Endothelial cell of umbilical vein (primary cell): ENCODE measurements at regions of chr1 and their contacts with region 1.

Region 1: DNA sequence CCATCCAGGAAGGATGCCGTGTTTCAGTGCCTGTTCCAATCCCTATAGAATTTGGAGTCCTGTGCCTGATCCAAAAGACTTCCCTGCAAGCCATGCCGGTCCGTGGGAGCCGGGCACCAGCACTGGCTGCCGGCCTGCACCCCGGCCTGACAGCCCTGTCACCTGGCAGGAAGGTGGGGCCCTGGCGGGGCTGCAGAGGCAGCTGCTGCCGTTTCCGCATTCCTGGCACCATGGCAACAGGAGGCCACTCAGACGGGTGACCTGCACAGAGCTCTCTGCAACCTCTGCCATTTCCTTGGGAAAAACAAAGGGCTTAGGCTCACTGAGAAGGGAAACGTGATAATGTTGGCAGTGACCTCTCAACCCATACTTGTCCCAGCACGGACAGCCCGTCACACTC is 63.2 kb upstream of the TMEM51 start:
- DNase-seq: peak; percentile 57
- H3K4me3 ChIP-seq: no peak overlapping the region
- H3K27ac ChIP-seq: no peak overlapping the region
- H3K4me1 ChIP-seq: peaks cover 11% of the 10 kb centered on the region
- H3K27me3 ChIP-seq: no peaks in the 10 kb centered on the region
- CTCF ChIP-seq: no peak
- POLR2A ChIP-seq: no peak

Region 2: DNA sequence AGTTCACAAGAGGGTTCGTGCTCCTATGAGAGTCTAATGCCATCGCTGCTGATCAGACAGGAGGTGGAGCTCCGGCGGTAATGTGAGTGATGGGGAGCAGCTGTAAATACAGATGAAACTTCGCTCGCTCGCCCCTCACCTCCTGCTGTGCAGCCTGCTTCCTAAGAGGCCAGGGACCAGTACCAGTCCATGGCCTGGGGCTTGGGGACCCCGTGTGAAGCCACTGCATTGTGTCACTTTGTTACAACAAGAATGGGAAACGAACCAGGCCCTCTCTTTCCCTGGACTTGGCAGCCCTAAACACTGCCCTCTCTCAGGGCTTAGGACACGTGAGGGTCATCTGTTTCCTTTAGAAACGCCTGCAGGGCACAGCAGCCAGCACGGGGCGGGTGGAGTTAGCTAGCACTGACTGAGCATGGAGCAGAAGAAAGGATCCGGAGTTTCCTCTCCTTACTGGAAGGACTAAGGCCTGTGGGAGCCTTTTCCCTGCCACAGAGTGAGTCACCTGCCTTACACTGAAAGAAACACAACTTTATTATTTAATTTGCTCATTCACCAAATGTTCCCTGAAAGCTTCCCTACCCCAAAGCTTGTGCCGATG is 122.0 kb before region 1 on chr1:
- CTCF ChIA-PET with region 1: no interaction called
- POLR2A ChIA-PET with region 1: no interaction called
- dilution Hi-C with region 1: no loop called
- intact Hi-C with region 1: no loop called
- DNase-seq: peak; percentile 67
- H3K4me3 ChIP-seq: no peak overlapping the region
- H3K27ac ChIP-seq: no peak overlapping the region
- H3K4me1 ChIP-seq: peaks cover 2% of the 10 kb centered on the region
- H3K27me3 ChIP-seq: no peaks in the 10 kb centered on the region
- CTCF ChIP-seq: no peak
- POLR2A ChIP-seq: no peak

Region 3: GRCh38 chr1:15038232-15039016 is 51.9 kb before region 1 on chr1:
- CTCF ChIA-PET with region 1: no interaction called
- POLR2A ChIA-PET with region 1: no interaction called
- dilution Hi-C with region 1: no loop called
- intact Hi-C with region 1: loop called (anchors 1 kb)
- DNase-seq: no peak
- H3K4me3 ChIP-seq: no peak overlapping the region
- H3K27ac ChIP-seq: no peak overlapping the region
- H3K4me1 ChIP-seq: no peaks in the 10 kb centered on the region
- H3K27me3 ChIP-seq: no peaks in the 10 kb centered on the region
- CTCF ChIP-seq: peak; percentile 31 to 35
- POLR2A ChIP-seq: no peak

Region 4: DNA sequence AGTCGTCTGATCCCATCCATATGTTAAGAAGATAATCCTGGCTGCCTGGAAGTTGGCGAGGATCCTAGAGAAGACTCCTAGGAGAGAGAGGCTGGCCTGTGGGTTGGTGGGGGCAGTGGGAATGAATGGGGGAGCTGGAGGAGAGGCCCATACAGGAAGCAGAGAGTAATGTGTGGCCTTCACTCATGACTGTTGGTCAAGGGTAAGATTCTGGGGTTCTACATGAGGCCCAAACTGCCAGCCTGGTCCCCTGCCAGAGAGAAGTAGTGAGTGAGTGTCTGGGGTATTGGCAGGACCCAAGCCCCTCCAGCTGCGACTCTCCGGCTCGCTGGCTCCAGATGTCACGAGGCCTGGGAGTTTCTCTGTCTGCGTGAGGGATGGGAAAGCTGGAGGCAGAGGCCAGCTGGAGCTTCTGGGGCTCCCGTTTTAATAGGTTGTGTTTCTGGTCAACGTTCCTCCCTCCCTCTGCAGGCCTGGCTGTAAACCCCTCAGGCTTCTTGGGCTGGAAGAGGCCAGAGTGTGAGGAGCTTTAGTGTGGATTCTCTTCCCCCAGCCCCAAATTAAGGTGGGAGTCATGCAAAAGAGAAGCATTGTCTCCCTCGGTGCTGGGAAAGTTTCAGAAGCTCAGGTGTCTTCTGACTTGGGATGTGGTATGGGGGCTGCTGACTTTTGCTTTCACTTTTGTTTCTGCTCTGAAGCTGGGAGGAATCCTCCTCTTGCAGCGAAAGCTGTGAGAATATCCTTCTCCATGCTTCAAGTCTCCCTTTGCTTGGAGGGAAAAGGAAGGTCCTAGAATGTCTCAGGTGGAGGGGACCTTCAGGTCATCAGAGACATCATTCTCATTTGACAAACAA is 65.7 kb after region 1 on chr1:
- CTCF ChIA-PET with region 1: no interaction called
- POLR2A ChIA-PET with region 1: no interaction called
- dilution Hi-C with region 1: no loop called
- intact Hi-C with region 1: no loop called
- DNase-seq: no peak
- H3K4me3 ChIP-seq: no peak overlapping the region
- H3K27ac ChIP-seq: no peak overlapping the region
- H3K4me1 ChIP-seq: peaks cover 23% of the 10 kb centered on the region
- H3K27me3 ChIP-seq: peaks cover 2 to 5% of the 10 kb centered on the region in 2 experiments
- CTCF ChIP-seq: no peak
- POLR2A ChIP-seq: no peak

Region 5: DNA sequence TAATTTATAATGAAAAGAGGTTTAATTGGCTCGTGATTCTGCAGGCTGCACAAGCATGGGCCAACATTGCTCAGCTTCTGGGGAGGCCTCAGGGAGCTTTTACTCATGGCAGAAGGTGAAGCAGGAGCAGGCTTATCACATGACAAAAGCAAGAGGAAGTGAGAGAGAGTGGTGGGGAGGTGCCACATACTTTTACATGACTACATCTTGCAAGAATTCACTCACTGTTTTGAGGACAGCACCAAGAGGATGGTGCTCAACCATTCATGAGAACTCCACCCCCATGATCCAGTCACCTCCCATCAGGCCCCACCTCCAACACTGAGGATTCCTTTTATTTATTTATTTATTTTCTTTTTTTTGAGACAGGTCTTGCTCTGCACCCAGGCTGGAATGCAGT is 588.2 kb after region 1 on chr1:
- CTCF ChIA-PET with region 1: no interaction called
- POLR2A ChIA-PET with region 1: no interaction called
- dilution Hi-C with region 1: no loop called
- intact Hi-C with region 1: no loop called
- DNase-seq: peak; percentile 14
- H3K4me3 ChIP-seq: no peak overlapping the region
- H3K27ac ChIP-seq: no peak overlapping the region
- H3K4me1 ChIP-seq: peaks cover under 1% of the 10 kb centered on the region
- H3K27me3 ChIP-seq: no peaks in the 10 kb centered on the region
- CTCF ChIP-seq: no peak
- POLR2A ChIP-seq: no peak